HEK293T (cell line): ENCODE measurements at regions of chr5 and their contacts with region 1.

Region 1: DNA sequence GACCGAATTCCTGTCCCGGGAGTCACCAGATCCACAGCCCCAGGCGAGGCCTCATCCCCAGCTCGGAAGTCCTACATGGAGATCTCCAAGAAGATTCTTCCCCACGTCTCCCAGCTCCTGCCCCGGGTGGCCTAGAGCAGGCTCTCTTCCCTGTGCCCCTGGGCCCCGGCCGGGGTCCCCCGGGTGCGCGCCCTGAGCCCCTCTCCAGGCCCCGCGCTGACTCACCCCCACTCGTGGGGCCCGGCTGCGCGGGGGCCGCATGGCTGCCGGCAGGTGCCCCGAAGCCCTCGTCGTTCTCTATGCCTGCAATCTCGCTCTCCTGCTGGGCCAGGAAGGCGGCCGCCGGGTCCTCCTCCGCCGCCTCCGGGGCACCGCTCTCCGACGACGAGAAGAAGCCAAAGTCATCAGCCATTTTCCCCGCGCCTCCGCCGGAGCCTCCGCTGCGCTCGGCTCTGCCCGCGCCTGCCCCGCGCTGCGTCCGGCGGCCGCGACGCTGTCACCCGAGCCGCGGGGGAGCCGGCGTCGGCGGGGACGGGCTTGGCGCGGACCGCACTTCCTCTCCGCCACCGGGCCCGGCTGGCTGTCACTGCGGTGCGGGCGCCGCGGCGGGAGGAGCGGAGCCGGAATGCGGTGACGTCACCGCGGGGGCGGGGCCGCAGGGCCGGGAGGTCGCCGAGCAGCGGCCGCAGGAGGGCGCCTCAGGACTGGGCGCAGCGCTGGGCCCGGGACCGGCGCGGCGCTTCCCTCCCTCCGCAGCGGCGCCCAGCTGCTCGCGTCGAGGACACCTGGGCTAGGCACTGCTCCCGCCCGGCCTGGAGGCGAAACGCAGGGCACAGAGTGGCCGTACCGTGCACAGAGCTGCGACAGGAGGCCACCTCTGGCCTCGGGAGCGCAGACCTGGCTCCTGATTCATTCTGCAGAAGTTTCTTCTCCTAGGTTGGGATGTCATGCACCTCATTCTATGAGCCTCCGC is at the start of gene CLTB:
- DNase-seq: peak; percentile 99

Region 2: GRCh38 chr5:176537608-176538504 is 121.6 kb after region 1 on chr5:
- CTCF ChIA-PET with region 1: interaction called, 4 read pairs
- POLR2A ChIA-PET with region 1: interaction called, 10 read pairs
- DNase-seq: peak; percentile 93